H1 (cell line): ENCODE measurements at regions of chr16 and their contacts with region 1.

Region 1: GRCh38 chr16:71412270-71413160 is 29.3 kb downstream of the TLE7 start:
- DNase-seq: peak; percentile 80 to 94
- H3K4me3 ChIP-seq: peak overlapping the region; percentile 29 to 68 (median 59); a peak in 7 of 8 replicates
- H3K27ac ChIP-seq: peak overlapping the region; percentile 16; the same call in 1 of the 2 replicates
- H3K4me1 ChIP-seq: peaks cover 0 to 4% (median 0%) of the 10 kb centered on the region in 4 experiments; a peak in 2 of 7 replicates
- H3K27me3 ChIP-seq: peaks cover 0 to 2% (median under 1%) of the 10 kb centered on the region in 4 experiments; a peak in 1 of 7 replicates
- CTCF ChIP-seq: peak; percentile 84 to 90 (median 86)
- EP300 ChIP-seq: no peak
- POLR2A ChIP-seq: no peak
- RAD21 ChIP-seq: peak; percentile 86 to 91

Region 2: DNA sequence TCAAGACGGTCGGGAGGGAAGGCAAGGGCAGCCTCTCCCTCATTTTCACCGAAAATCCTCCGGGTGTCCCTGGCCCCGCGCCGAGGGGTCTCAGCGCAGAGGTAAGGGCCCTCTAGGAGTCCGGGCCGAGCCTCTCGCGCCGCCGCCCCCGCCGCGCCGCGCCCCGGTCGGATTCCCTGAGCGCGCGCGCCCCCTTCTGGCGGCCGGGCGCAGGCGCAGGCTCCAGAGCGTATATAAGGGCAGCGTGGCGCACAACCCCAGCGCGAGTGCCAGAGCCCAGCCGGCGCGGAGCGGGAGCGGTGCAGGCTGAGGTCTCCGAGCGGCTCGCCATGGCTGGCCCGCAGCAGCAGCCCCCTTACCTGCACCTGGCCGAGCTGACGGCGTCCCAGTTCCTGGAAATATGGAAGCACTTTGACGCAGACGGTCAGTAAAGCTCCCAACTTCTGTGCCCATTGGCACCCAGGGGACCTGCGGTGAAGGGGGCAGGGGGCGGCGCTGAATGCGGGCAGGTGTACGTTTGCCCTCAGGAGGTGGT is 54.0 kb before region 1 on chr16 and contains the start of gene CALB2:
- CTCF ChIA-PET with region 1: interaction called, 54 read pairs
- POLR2A ChIA-PET with region 1: interaction called, 3 read pairs
- DNase-seq: peak; percentile 27 to 91
- H3K4me3 ChIP-seq: peak within 1 kb of the TSS; percentile 30 to 65 (median 51); a peak in 7 of 8 replicates
- H3K27ac ChIP-seq: no peak within 1 kb of the TSS
- H3K4me1 ChIP-seq: peaks cover 0 to 12% (median 6%) of the 10 kb centered on the region in 4 experiments; a peak in 5 of 7 replicates
- H3K27me3 ChIP-seq: peaks cover 0 to 22% (median 18%) of the 10 kb centered on the region in 4 experiments; a peak in 6 of 7 replicates
- CTCF ChIP-seq: peak; percentile 77 to 97 (median 85)
- EP300 ChIP-seq: 0 out of 3 replicates have a peak, but pooled peaks of 1 of the 2 experiments have one; percentile 21
- POLR2A ChIP-seq: peak in 1 of 2 experiments; percentile 64; a peak in 1 of 3 replicates
- RAD21 ChIP-seq: peak; percentile 73 to 98
- total RNA-seq, gene CALB2: 1.9 and 2.7 TPM in 2 replicates

Region 3: DNA sequence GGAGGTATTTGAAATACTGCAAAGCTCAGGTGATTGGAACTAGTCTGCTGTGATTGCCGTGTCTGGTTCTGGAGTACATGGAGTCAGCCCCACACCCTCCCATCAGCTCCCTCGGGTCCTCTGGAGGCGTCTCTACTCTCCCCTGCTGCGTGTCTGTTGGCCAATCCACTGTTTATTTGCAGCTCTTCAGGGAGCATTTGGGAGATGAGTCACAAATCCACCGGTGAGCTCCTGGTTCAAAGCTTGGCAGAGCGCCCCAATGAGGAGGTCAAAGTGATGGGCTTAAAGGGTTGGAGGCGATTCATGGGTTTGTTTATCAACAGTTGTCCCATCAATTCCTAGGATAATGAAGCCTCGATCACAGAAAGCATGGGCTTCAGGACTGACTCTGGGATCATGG is 39.4 kb before region 1 on chr16:
- CTCF ChIA-PET with region 1: interaction called, 34 read pairs
- POLR2A ChIA-PET with region 1: interaction called, 3 read pairs
- DNase-seq: no peak
- H3K4me3 ChIP-seq: no peak overlapping the region
- H3K27ac ChIP-seq: no peak overlapping the region
- H3K4me1 ChIP-seq: no peaks in the 10 kb centered on the region
- H3K27me3 ChIP-seq: no peaks in the 10 kb centered on the region
- CTCF ChIP-seq: no peak
- EP300 ChIP-seq: no peak
- POLR2A ChIP-seq: no peak
- RAD21 ChIP-seq: no peak

Region 4: GRCh38 chr16:71396594-71396993 is 15.9 kb before region 1 on chr16:
- CTCF ChIA-PET with region 1: interaction called, 24 read pairs
- POLR2A ChIA-PET with region 1: interaction called, 4 read pairs
- DNase-seq: no peak
- H3K4me3 ChIP-seq: no peak overlapping the region
- H3K27ac ChIP-seq: no peak overlapping the region
- H3K4me1 ChIP-seq: peaks cover 0 to 7% (median 0%) of the 10 kb centered on the region in 4 experiments; a peak in 1 of 7 replicates
- H3K27me3 ChIP-seq: no peaks in the 10 kb centered on the region
- CTCF ChIP-seq: no peak
- EP300 ChIP-seq: no peak
- POLR2A ChIP-seq: no peak
- RAD21 ChIP-seq: no peak

Region 5: DNA sequence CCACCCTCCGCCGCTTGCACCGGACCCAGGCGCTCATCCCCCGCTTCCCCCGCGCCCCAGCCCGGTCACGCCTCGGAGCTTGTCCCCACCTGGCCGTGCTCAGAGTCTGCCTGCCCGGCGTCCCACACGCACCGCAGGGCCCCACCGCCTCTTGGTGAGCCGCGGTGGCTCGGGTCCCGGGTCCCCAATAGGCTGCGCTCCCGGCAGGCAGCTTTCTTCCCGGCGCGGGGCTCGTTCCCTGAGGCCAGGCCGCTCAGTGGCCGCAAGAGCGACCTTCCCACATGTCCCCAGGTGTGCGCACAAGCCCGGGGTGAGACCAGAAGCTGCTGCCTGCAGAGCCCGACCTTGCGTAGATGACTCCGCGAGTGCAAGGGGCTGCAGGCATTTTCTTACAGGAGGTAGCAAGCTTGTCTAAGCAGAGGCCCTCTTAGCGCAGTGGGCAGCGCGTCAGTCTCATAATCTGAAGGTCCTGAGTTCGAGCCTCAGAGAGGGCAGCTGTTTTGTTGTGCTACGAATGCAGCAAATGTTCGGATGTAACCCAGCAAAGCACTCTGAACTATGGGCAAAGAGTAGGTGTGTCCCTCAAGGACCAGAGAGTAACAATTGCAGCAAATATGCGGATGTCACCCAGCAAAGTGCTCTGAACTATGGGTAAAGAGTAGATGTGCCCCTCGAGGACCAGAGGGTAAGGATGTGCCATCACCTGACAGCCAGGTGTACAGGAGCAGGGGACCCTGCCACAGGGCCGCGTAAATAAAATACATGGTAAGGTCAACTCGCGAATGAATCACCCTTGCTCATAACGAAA is 13.8 kb after region 1 on chr16:
- CTCF ChIA-PET with region 1: interaction called, 99 read pairs
- POLR2A ChIA-PET with region 1: interaction called, 3 read pairs
- DNase-seq: peak; percentile 94 to 99
- H3K4me3 ChIP-seq: peak overlapping the region; percentile 63 to 83 (median 74)
- H3K27ac ChIP-seq: no peak overlapping the region
- H3K4me1 ChIP-seq: peaks cover 0 to 5% (median 3%) of the 10 kb centered on the region in 4 experiments; a peak in 5 of 7 replicates
- H3K27me3 ChIP-seq: peaks cover 0 to 13% (median 5%) of the 10 kb centered on the region in 4 experiments; a peak in 4 of 7 replicates
- CTCF ChIP-seq: no peak
- EP300 ChIP-seq: no peak
- POLR2A ChIP-seq: no peak
- RAD21 ChIP-seq: no peak

Region 6: GRCh38 chr16:71499775-71500364 is 87.4 kb after region 1 on chr16:
- CTCF ChIA-PET with region 1: interaction called, 54 read pairs
- POLR2A ChIA-PET with region 1: no interaction called
- DNase-seq: peak in 1 of 2 experiments; percentile 60
- H3K4me3 ChIP-seq: no peak overlapping the region
- H3K27ac ChIP-seq: no peak overlapping the region
- H3K4me1 ChIP-seq: no peaks in the 10 kb centered on the region
- H3K27me3 ChIP-seq: no peaks in the 10 kb centered on the region; a peak in 1 of 7 replicates
- CTCF ChIP-seq: peak in 2 of 3 experiments; percentile 81 to 83; a peak in 3 of 4 replicates
- EP300 ChIP-seq: no peak
- POLR2A ChIP-seq: no peak
- RAD21 ChIP-seq: peak; percentile 84 to 88